Ovary (tissue), 10 donors: ENCODE measurements at regions of chr17 and their contacts with region 1.

Region 1: DNA sequence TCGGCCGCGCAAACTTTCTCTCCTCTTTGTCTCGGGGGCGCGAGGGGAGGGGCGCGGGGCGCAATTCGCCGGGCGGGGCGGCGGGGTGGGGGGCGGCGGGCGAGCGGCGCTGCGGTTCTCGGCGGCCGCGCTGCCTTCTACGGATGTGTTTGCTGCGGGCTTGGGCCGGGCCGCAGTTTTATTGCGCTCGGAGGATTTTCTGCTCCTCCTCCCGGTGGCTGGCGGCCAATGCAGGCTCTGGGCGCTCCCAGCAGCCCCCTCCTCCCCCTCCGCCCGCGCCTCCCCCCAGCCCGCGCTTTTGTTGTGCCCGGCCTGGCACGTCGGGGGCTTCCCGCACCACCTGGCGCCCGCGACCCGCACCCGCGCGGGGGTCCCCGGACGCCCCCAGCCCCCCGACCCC is at the start of gene TIMP2:
- DNase-seq: peak; percentile 95 to 97 (median 95)
- H3K4me3 ChIP-seq: peak within 1 kb of the TSS; percentile 82
- H3K27ac ChIP-seq: peak within 1 kb of the TSS; percentile 95 to 98
- H3K4me1 ChIP-seq: peaks cover 31% of the 10 kb centered on the region
- H3K27me3 ChIP-seq: no peaks in the 10 kb centered on the region
- CTCF ChIP-seq: no peak
- EP300 ChIP-seq: no peak
- POLR2A ChIP-seq: no peak
- total RNA-seq, gene TIMP2: 221 to 854 (median 693) TPM

Region 2: GRCh38 chr17:78883164-78884122 is 41.8 kb before region 1 on chr17:
- intact Hi-C with region 1: loop called in 2 of 4 experiments (anchors 5 kb)
- DNase-seq: peak; percentile 77 to 88 (median 86)
- H3K4me3 ChIP-seq: peak overlapping the region; percentile 29
- H3K27ac ChIP-seq: peak overlapping the region; percentile 70 to 84
- H3K4me1 ChIP-seq: peaks cover 42% of the 10 kb centered on the region
- H3K27me3 ChIP-seq: no peaks in the 10 kb centered on the region
- CTCF ChIP-seq: peak in 1 of 3 donors; percentile 25
- EP300 ChIP-seq: peak; percentile 48
- POLR2A ChIP-seq: peak; percentile 50

Region 3: GRCh38 chr17:78970834-78971773 is 45.9 kb after region 1 on chr17:
- intact Hi-C with region 1: loop called in 3 of 4 experiments (anchors 2 to 10 kb)
- DNase-seq: peak; percentile 81 to 91 (median 89)
- H3K4me3 ChIP-seq: no peak overlapping the region
- H3K27ac ChIP-seq: peak overlapping the region; percentile 1 to 66
- H3K4me1 ChIP-seq: peaks cover 13% of the 10 kb centered on the region
- H3K27me3 ChIP-seq: no peaks in the 10 kb centered on the region
- CTCF ChIP-seq: peak; percentile 82 to 91 (median 88)
- EP300 ChIP-seq: no peak
- POLR2A ChIP-seq: peak; percentile 10

Region 4: DNA sequence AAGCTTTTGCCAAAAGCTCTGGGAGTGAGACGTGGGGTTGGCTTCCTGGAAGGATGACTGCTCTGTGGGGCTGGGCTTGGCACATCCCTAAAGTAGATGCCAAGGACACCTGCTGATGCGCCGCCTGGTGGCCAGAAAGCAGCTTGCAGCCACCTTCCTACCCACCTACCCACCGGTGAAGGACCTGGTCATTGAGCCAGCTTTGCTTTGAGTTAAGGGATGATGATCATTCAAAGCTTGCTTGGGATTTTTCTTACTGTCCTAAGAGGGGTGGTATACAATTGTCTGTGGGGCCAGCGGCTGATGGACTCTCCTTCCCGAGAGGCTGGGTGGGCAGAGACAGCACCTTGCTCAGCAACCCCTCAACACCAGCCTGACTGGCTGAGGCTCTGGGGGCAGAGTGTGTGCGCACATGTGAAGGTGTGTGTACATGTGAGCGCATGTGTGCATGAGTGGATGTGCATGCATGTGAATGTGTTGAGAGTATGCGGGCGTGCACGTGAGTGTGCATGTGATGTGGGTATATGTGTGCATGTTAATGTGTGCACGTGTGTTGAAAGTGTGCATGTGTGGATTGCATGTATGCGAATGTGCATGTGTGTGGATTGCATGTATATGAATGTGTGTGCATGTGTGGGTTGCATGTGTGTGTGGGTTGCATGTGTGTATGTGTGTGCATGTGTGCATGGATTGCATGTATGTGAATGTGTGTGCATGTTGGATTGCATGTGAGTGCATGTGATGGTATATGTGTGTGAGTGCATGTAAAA is 117.4 kb after region 1 on chr17:
- intact Hi-C with region 1: no loop called
- DNase-seq: peak; percentile 57 to 83 (median 76)
- H3K4me3 ChIP-seq: no peak overlapping the region
- H3K27ac ChIP-seq: no peak overlapping the region
- H3K4me1 ChIP-seq: peaks cover 2% of the 10 kb centered on the region
- H3K27me3 ChIP-seq: no peaks in the 10 kb centered on the region
- CTCF ChIP-seq: peak; percentile 54 to 84 (median 74)
- EP300 ChIP-seq: no peak
- POLR2A ChIP-seq: no peak